Activated CD4-positive, alpha-beta memory T cell treated with anti-CD3 and anti-CD28 coated beads for 36 hours (primary cell): ENCODE measurements at regions of chr14 and their contacts with region 1.

Region 1: DNA sequence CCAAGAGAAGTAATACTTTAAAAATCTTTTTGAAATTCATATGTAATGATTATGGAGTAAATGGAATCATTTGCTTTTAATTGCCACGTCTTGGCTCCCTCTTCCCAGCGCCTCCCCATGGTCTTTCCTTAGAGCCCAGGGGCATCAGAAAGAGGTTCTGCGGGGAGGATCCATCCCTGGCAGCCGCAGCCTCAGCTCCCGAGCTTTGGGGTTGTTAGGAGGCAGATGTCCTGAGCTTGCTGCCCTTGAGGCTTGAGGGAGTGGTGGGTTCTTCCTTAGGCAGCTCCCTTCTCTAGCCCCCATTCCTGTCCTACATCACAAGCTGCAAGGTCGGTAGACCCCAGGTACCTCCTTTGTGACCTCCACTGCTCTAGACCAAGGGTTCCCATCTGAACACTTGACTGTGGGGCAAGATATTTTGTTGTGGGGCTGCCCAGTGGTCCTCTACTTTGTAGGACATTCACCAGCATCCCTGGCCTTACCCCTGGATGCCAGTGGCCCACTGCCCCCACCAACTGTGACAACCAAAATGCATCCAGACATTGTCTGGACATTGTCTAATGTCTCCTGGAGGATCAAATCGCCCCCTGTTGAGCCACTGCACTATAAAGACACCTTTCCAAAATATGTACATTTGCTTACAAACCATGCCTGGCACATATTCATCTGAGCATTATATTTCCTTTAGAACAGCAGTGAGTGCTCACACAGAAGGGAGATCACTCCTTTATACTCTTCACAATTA is 6.3 kb downstream of the PPP2R5C start:
- DNase-seq: no peak
- H3K4me3 Mint-ChIP-seq: no peak overlapping the region
- H3K27ac Mint-ChIP-seq: no peak overlapping the region
- H3K4me1 Mint-ChIP-seq: peaks cover 37% of the 10 kb centered on the region
- H3K27me3 Mint-ChIP-seq: no peaks in the 10 kb centered on the region

Region 2: GRCh38 chr14:101062065-101062450 is 705.7 kb before region 1 on chr14:
- CTCF ChIA-PET with region 1: no interaction called
- POLR2A ChIA-PET with region 1: no interaction called
- intact Hi-C with region 1: no loop called
- DNase-seq: no peak
- H3K4me3 Mint-ChIP-seq: no peak overlapping the region
- H3K27ac Mint-ChIP-seq: no peak overlapping the region
- H3K4me1 Mint-ChIP-seq: no peaks in the 10 kb centered on the region
- H3K27me3 Mint-ChIP-seq: no peaks in the 10 kb centered on the region

Region 3: DNA sequence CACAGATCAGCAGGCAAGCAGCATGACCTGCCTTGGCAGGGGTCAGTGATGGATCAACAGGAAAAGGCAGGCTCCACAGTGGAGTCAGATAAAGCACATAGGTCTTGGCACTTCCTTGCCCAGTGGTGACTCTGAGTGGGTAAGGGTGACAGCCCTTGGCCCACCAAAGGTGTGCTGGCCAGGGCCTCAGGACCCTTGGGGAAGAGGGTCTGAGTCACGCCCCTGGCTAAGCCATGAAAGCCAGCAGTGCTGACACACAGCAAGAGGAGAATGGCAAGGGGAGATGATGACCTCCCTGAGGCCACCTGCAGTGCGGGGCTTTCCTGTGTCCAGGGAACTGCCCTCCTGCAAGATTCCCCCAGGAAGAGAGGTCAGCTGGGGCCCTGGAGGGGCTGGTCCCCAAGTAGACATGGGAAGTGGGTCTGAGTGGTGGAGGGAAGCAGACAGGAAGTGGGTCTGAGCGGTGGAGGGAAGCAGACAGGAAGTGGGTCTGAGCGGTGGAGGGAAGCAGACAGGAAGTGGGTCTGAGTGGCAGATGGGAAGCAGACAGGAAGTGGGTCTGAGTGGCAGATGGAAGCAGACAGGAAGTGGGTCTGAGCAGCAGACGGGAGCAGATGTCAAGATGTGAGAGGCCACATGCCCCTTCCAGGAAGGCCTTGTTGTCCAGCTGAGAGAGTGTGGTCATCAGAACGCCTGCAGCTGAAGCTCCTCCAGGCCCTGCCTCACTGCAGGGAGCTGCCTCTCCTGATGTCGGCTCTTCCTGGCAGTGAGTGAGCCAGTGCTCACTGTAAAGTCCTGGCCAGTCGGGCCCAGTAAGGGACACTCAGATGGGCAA is 171.7 kb before region 1 on chr14:
- CTCF ChIA-PET with region 1: no interaction called
- POLR2A ChIA-PET with region 1: no interaction called
- intact Hi-C with region 1: no loop called
- DNase-seq: peak; percentile 51
- H3K4me3 Mint-ChIP-seq: no peak overlapping the region
- H3K27ac Mint-ChIP-seq: peak overlapping the region; percentile 76
- H3K4me1 Mint-ChIP-seq: peaks cover 32% of the 10 kb centered on the region
- H3K27me3 Mint-ChIP-seq: no peaks in the 10 kb centered on the region

Region 4: GRCh38 chr14:101654051-101654450 is 113.7 kb before region 1 on chr14:
- CTCF ChIA-PET with region 1: no interaction called
- POLR2A ChIA-PET with region 1: no interaction called
- intact Hi-C with region 1: no loop called
- DNase-seq: no peak
- H3K4me3 Mint-ChIP-seq: no peak overlapping the region
- H3K27ac Mint-ChIP-seq: no peak overlapping the region
- H3K4me1 Mint-ChIP-seq: no peaks in the 10 kb centered on the region
- H3K27me3 Mint-ChIP-seq: peaks cover 7% of the 10 kb centered on the region

Region 5: DNA sequence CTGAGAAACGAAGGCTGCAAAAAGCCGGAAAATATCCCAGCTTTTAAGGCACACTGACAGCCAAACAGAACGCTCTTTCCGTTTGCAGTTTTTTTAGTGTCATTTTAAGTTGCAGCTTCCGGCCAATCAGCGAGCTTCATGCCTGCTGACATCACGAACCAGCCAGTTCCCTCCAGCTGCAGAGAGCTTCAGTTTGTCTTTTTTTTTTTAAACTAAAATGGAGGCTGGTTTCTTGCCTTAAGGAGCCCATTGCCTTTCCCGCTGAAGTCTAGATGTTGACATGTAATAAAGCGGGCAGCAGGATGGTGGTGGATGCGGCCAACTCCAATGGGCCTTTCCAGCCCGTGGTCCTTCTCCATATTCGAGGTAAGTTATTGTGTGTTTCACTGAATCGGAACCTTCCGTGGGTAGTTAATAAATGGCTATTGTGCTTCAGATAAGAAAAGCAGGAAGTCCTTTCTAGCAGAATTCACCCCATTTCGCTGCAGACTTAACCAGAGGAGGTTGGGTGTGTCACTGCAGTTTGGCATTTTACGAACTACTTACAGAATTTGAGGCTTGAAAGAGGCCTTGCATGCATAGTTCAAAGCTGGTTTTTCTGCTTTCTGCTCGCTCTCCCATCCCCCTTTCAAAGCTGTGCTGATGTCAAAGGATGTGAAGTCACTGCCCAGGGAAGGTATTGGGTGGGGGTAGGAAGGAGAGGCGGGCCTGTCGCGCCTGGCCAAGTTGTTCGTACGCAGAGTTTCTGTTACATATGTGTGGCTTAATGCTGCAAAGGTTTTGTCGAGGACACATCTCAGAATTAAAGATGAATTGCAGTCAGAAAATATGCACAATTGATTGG is 42.1 kb after region 1 on chr14:
- CTCF ChIA-PET with region 1: interaction called, 28 read pairs
- POLR2A ChIA-PET with region 1: interaction called, 7 read pairs
- intact Hi-C with region 1: no loop called
- DNase-seq: peak; percentile 91
- H3K4me3 Mint-ChIP-seq: peak overlapping the region; percentile 86
- H3K27ac Mint-ChIP-seq: peak overlapping the region; percentile 98
- H3K4me1 Mint-ChIP-seq: peaks cover 49% of the 10 kb centered on the region
- H3K27me3 Mint-ChIP-seq: no peaks in the 10 kb centered on the region

Region 6: GRCh38 chr14:101843665-101844064 is 75.9 kb after region 1 on chr14:
- CTCF ChIA-PET with region 1: interaction called, 82 read pairs
- POLR2A ChIA-PET with region 1: interaction called, 7 read pairs
- intact Hi-C with region 1: loop called (anchors 1 kb)
- DNase-seq: peak; percentile 83
- H3K4me3 Mint-ChIP-seq: no peak overlapping the region
- H3K27ac Mint-ChIP-seq: peak overlapping the region; percentile 85
- H3K4me1 Mint-ChIP-seq: peaks cover 87% of the 10 kb centered on the region
- H3K27me3 Mint-ChIP-seq: no peaks in the 10 kb centered on the region

Region 7: DNA sequence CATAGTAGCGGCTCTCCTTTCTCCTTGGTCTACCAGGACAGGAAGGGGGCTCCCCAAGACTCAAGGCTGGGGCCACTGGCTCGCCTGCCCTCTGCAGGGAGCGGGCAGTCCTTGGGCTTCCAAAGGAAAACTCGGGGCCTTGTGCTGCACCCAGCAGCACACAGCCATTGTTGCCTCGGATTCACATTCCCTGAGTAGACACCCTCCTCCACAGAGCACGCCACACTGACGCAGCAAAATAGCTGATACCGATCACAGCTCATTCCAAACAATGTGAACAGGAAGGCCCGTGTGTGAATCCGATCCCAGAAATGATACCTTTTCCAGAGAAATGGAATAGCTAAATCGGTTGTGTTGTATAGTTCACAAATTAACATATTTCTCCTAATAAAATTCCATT is 131.5 kb after region 1 on chr14:
- CTCF ChIA-PET with region 1: interaction called, 11 read pairs
- POLR2A ChIA-PET with region 1: interaction called, 3 read pairs
- intact Hi-C with region 1: no loop called
- DNase-seq: no peak
- H3K4me3 Mint-ChIP-seq: no peak overlapping the region
- H3K27ac Mint-ChIP-seq: no peak overlapping the region
- H3K4me1 Mint-ChIP-seq: no peaks in the 10 kb centered on the region
- H3K27me3 Mint-ChIP-seq: no peaks in the 10 kb centered on the region

Region 8: GRCh38 chr14:101947906-101948665 is 180.3 kb after region 1 on chr14:
- CTCF ChIA-PET with region 1: interaction called, 13 read pairs
- POLR2A ChIA-PET with region 1: no interaction called
- intact Hi-C with region 1: no loop called
- DNase-seq: peak; percentile 100
- H3K4me3 Mint-ChIP-seq: peak overlapping the region; percentile 92
- H3K27ac Mint-ChIP-seq: peak overlapping the region; percentile 95
- H3K4me1 Mint-ChIP-seq: peaks cover 15% of the 10 kb centered on the region
- H3K27me3 Mint-ChIP-seq: peaks cover 20% of the 10 kb centered on the region

Region 9: DNA sequence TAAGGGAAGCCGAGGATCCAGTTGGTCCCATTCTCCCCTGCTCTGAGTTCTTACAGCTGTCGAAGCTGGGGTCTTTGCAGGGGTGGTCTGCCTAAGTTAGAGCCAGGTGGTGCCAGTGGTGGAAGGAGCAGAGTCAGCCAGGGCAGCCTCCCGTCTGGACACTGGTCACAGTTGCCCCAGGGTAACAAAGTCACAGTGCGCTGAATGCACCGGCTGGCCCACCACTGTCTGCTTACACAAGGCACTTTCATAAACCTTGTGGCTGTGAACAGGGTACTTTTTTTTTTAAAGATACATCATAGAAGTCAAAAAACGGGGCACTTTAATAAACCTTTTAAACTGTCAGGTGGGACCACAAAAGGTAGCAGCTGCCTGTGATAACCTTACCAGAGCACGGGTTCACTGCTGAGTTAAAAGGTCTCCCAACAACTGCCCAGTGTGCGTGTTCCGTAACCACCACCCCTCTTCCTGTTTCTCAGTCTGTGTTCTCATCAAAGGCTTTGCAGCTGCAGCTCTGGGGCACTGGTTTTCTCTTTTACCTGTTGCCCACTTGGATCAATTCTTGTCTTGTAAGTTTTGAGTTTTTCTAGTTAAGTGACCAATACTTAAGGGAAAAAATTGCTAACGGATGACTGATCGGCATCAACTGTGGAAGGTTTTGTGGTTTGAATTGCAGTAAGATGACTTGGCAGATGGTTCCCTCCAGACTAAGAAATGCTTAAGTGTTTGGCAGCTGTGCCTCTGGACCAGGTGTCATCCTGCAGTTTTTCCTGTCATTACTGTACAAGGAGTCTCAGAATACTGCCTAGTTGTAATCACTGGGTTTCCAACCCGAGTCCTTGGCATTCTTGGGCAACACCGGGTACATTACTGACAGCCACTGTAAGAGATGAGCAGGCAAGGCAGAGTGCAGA is 252.5 kb after region 1 on chr14:
- CTCF ChIA-PET with region 1: no interaction called
- POLR2A ChIA-PET with region 1: no interaction called
- intact Hi-C with region 1: loop called (anchors 1 kb)
- DNase-seq: peak; percentile 80
- H3K4me3 Mint-ChIP-seq: no peak overlapping the region
- H3K27ac Mint-ChIP-seq: peak overlapping the region; percentile 85
- H3K4me1 Mint-ChIP-seq: peaks cover 23% of the 10 kb centered on the region
- H3K27me3 Mint-ChIP-seq: no peaks in the 10 kb centered on the region